ENCODE measurements at regions of chr12 and their contacts with region 1.

Region 1: DNA sequence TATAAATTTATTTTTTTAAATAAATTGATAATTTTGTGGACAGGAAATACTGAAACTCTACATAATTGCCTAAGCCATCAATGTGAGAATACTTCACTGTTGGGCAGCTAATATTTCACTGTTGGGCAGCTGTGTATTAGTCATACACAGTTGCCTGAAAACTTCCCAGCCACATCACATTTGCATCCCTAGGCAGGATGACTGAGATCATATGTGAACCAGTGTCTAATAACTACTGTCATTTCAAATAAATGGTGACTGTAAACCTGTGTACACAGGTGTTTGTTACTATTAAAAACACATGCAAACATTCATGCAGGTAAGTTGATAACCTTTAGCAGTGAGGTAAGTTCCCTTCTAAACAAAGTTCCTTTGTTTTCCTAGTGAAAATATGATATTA is 43.9 kb downstream of the TMTC3 start:
- DNase-seq: no peak
- ATAC-seq: peak in 2 of 4 donors; percentile 30 to 49
- H3K4me3 ChIP-seq: no peak overlapping the region
- H3K27ac ChIP-seq: no peak overlapping the region
- H3K4me1 ChIP-seq: no peaks in the 10 kb centered on the region
- H3K27me3 ChIP-seq: no peaks in the 10 kb centered on the region
- CTCF ChIP-seq: no peak

Region 2: GRCh38 chr12:88006351-88006750 is 179.7 kb before region 1 on chr12:
- intact Hi-C with region 1: no loop called
- DNase-seq: no peak
- ATAC-seq: no peak
- H3K4me3 ChIP-seq: no peak overlapping the region
- H3K27ac ChIP-seq: no peak overlapping the region
- H3K4me1 ChIP-seq: no peaks in the 10 kb centered on the region
- H3K27me3 ChIP-seq: no peaks in the 10 kb centered on the region
- CTCF ChIP-seq: no peak

Region 3: DNA sequence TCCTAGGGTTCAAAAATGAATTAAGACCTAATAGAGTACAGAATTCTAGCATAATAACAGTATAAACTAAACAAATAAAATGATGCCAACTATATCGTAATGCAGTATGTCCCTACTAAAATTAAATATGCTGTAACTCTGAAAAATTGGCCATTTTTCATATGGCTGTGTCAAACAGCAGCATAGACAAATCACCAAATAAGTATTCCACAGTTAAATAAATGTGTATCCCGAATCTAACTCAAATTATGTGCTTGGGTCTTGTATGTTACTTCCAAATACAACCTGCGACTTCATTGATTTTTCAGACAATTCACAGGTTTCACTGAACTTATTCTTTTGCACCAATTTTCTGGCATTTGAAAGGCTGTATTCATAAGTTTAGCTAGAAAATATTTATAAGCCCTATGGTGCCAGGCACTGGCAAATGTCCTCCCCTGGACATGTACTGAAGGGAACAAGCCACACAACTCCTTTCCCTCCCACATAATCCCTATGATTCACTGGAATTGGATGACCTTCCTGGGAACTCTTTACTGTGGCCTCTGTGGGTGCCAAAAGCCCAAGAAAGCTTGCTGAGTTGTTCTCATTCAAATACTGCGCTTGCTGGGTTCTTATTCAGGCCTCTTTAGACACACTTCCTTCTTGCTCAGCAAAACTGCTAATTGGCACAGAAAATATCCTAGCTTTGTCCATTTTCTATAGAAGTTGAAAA is 285.5 kb after region 1 on chr12:
- intact Hi-C with region 1: loop called in 1 of 2 experiments (anchors 5 kb)
- DNase-seq: peak in 1 of 2 donors; percentile 14
- ATAC-seq: peak; percentile 42 to 91 (median 68)
- H3K4me3 ChIP-seq: no peak overlapping the region
- H3K27ac ChIP-seq: no peak overlapping the region
- H3K4me1 ChIP-seq: peaks cover 6% of the 10 kb centered on the region
- H3K27me3 ChIP-seq: no peaks in the 10 kb centered on the region
- CTCF ChIP-seq: no peak

Region 4: GRCh38 chr12:88716240-88716639 is 530.2 kb after region 1 on chr12:
- intact Hi-C with region 1: no loop called
- DNase-seq: no peak
- ATAC-seq: no peak
- H3K4me3 ChIP-seq: no peak overlapping the region
- H3K27ac ChIP-seq: no peak overlapping the region
- H3K4me1 ChIP-seq: no peaks in the 10 kb centered on the region
- H3K27me3 ChIP-seq: no peaks in the 10 kb centered on the region
- CTCF ChIP-seq: no peak